ENCODE measurements at regions of chr19 and their contacts with region 1.

Region 1: DNA sequence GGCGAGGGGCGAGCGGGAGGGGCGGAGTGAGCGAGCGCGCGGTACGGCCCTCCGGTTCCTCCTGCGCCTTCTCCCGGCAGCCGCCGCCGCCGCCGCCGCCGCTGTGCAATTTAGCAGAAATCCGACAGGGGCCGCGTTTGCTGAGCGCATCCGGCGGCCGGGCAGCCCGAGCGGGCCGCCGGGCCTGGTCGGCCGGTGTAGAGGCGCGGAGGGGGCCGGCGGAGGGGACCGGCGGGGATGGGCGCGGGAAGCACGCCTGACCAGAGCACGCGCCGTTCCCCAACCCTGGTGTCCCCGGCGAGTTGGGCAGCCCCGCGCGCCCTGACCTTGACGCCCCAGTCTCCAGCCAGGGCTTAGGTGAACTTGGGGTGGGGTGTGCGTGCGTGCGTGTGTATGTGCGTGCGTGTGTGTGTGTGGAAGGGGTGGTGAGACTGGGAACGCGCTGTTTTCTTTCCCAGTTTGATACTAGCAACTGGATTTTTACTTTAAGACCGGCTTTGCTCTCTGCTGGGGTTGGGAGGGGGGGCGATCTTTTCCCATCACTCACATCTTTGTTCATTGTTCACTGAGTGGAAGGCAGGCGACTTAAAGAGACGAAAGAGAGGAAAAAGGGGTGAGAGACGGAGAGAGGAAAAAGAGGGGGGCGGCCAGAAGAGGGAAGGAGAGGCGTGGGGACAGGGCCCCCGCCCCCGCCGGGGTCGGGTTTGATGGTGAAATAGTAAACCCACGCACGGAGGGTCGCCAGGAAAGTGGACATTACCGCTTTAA is 144.3 kb upstream of the ZNF536 start:
- DNase-seq: peak; percentile 56 to 86 (median 74)
- H3K4me3 ChIP-seq: peak overlapping the region; percentile 36 to 81 (median 64)
- H3K27ac ChIP-seq: peak overlapping the region in 58 of 59 donors; percentile 46 to 96 (median 90)
- H3K27me3 ChIP-seq: peaks cover 0 to 64% (median 32%) of the 10 kb centered on the region in 45 donors
- CTCF ChIP-seq: peak; percentile 19 to 80 (median 64)

Region 2: GRCh38 chr19:30214651-30215210 is 13.1 kb before region 1 on chr19:
- intact Hi-C with region 1: no loop called
- DNase-seq: no peak
- H3K4me3 ChIP-seq: no peak overlapping the region
- H3K27ac ChIP-seq: no peak overlapping the region
- H3K27me3 ChIP-seq: peaks cover 0 to 13% (median 0%) of the 10 kb centered on the region in 45 donors
- CTCF ChIP-seq: no peak

Region 3: DNA sequence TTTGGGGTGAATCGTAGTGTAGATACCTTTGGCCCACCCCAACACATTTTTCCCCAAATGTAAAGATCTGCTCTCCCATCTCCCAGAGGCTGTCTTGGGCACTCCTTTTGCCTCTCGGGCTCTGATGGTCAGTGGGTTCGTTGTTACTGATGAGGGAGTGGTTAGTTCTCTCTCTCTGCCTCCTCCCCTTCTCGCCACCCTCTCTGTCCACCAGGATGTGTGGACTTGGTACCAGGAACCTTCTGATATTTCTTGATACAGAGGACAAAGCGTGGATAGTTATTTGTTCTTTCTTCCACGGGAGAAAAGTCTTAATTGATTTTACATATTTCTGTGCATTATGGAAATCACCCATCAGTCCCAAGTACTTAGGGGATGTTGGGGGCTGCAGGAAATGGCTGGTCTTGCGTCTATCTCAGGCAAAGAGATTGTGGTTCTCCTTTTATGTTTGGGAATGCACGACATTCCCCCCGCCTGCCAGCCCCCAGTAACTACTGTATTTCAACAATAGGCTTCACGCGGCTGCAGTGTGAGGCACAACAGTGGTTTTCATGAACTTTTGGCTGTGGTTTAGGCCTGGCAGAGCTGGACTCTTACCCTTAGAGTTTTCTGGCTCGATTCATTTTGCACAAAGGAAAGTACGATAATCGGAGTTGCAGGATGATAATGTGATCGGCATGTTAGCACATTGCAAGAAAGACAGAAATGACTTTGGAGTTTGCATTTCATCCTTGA is 65.4 kb after region 1 on chr19:
- intact Hi-C with region 1: loop called in 1 of 2 experiments (anchors 5 kb)
- DNase-seq: peak in 8 of 10 donors; percentile 41 to 82 (median 61)
- H3K4me3 ChIP-seq: peak overlapping the region in 31 of 59 donors; percentile 1 to 56 (median 20)
- H3K27ac ChIP-seq: peak overlapping the region; percentile 24 to 97 (median 87)
- H3K27me3 ChIP-seq: peaks cover 0 to 5% (median 0%) of the 10 kb centered on the region in 45 donors
- CTCF ChIP-seq: peak in 3 of 56 donors; percentile 6 to 15 (median 12)

Region 4: GRCh38 chr19:30358821-30359580 is 131.2 kb after region 1 on chr19:
- intact Hi-C with region 1: loop called (anchors 5 kb)
- DNase-seq: peak in 1 of 10 donors; percentile 7
- H3K4me3 ChIP-seq: no peak overlapping the region
- H3K27ac ChIP-seq: peak overlapping the region in 46 of 59 donors; percentile 41 to 96 (median 82)
- H3K27me3 ChIP-seq: peaks cover 0 to 4% (median 0%) of the 10 kb centered on the region in 45 donors
- CTCF ChIP-seq: no peak

Region 5: DNA sequence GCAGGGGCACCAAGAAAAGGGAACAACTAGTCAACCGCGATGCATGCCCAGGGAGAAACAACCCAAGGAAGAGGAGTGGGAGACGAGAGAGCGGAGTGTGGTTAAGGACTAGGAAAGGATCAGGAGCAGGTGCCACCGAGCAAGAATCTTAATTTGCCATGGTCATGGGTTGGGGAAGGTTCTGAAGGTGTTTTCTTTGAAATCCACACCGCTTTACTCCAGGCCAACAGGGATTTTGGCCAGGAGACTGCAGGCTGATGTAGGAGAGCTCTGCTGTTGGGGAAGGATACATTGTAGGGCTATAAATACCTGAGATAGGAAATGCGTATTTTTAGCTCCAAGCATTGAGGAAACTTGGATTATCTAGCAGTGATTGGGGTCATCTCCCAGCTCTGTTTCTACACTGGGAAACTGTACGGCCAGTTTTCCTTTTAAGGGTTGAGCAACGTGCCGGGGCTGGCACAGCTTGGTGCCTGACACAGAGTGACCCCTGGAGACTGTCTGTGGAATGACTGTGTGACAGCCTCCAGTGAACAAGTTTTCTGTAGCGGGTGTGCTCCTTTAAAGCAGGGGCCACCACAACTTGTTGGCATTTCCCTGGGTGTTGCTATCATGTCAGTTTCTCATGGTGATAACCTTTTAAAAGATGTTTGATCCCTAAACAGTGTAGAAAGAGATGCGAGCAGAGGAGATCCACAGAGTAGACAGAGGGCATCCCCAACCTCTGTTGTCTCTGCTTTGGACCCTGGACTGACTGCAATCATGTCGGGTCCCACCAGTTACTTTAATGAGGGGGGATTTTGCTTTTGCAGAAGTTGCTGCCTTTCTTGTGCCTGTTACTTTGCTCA is 178.6 kb after region 1 on chr19:
- intact Hi-C with region 1: loop called (anchors 1 to 10 kb)
- DNase-seq: peak in 8 of 10 donors; percentile 23 to 74 (median 67)
- H3K4me3 ChIP-seq: peak overlapping the region in 4 of 59 donors; percentile 1 to 20 (median 10)
- H3K27ac ChIP-seq: peak overlapping the region in 58 of 59 donors; percentile 19 to 95 (median 82)
- H3K27me3 ChIP-seq: peaks cover 0 to 4% (median 0%) of the 10 kb centered on the region in 45 donors
- CTCF ChIP-seq: peak in 55 of 56 donors; percentile 27 to 82 (median 62)

Region 6: GRCh38 chr19:30556230-30556711 is 328.4 kb after region 1 on chr19:
- intact Hi-C with region 1: loop called in 1 of 2 experiments (anchors 10 kb)
- DNase-seq: peak in 5 of 10 donors; percentile 17 to 59 (median 53)
- H3K4me3 ChIP-seq: peak overlapping the region in 8 of 59 donors; percentile 0 to 40 (median 19)
- H3K27ac ChIP-seq: peak overlapping the region in 58 of 59 donors; percentile 77 to 99 (median 93)
- H3K27me3 ChIP-seq: peaks cover 0 to 5% (median 0%) of the 10 kb centered on the region in 45 donors
- CTCF ChIP-seq: peak in 26 of 56 donors; percentile 7 to 47 (median 28)

Region 7: DNA sequence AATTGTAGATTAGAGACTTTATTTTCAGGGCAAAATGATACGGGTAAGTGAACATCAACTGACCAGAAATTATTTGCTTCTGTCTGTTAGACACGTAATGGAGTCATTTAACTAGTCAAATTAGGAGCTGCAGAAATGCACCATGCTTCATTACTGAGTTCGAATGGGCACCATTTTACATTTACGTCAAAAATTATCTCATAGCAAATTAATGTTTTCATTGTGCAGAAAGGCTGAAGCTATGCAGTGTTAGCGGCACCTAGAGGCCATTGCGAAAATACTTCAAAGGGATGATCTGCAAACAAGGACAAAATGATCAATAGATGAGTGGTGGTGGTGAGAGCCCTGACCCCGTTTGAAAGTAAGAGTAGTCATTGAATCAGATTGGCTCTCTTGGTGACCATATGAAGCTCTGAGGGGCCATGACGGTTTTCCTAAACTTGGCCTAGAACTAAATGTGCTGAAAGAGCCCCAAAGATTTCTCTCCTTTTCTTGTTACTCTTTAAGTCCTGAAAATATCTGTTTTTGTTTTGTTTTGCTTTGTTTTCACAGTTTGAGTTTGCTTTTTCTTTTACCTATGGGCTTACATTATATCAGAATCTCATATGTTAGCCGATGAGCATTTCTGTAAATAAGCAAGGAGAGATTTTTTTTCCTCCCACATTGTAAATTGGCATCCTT is 422.2 kb after region 1 on chr19:
- intact Hi-C with region 1: loop called (anchors 5 kb)
- DNase-seq: peak in 3 of 10 donors; percentile 62 to 74 (median 62)
- H3K4me3 ChIP-seq: peak overlapping the region in 15 of 59 donors; percentile 2 to 40 (median 13)
- H3K27ac ChIP-seq: peak overlapping the region in 53 of 59 donors; percentile 3 to 85 (median 68)
- H3K27me3 ChIP-seq: peaks cover 0 to 48% (median 9%) of the 10 kb centered on the region in 45 donors
- CTCF ChIP-seq: peak; percentile 51 to 96 (median 86)

Measured in dorsolateral prefrontal cortex (tissue), 120 donors.